ENCODE measurements at regions of chr12 and their contacts with region 1.

Region 1: DNA sequence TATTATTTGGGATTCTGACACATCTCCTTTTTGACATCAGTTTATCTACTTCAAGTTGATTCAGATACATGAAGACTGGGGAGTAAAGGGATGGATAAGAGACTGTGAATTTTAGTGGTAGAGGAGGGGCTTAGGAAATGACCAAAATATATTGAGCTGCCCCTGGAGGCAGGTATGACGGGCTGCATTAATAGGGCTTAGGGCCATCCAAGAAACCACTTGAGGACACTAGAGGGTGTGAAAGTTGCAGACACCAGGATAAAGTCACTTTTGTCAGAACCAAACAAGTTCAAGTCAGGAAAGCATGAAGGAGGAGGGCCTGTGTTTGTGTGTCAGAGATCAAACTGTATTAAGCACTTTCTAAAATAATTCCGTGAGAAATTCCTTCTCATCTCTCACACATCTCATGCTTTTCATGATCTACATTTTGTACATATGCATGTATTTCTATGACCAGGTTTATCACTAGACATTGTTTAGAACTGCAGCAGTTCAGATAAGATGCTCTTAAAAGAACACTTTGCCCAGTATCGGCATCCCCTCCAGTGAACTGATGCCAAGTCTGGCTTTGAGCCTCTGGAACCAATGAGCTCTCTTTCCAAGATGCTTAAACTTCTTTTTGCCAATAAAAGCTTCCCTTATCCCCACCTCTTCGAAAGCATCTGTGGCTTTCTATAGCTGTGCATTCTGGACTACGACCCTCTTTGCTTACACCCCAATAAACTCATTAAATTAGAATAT is 136.9 kb downstream of the SLC38A1 start:
- DNase-seq: no peak
- ATAC-seq: peak; percentile 65

Region 2: DNA sequence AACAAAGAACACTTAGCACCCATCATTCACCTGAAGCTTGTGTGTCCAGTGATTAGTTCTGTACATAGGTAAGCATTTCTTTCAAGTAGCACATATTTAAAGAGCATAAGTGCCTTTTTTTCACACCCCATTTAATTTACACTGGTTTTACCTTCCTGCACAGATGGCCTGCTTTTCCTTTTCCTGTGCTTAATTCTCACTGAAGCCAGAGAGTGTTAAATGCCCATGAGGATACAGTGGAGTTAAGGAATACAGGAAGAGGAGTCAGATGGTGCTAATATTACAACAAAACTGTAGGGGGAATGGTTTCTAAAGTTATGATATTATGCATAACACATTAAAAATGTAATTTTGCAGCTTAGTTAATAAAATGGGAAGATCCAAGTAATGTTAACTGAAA is 168.0 kb after region 1 on chr12:
- intact Hi-C with region 1: loop called (anchors 5 kb)
- DNase-seq: no peak
- ATAC-seq: no peak

Measured in Right ventricle myocardium inferior (tissue), 1 donor.